MCF 10A (cell line): ENCODE measurements at regions of chr4 and their contacts with region 1.

Region 1: GRCh38 chr4:118968005-118968404 is 79.4 kb downstream of the SYNPO2 start:
- DNase-seq: peak; percentile 60
- H3K4me3 Mint-ChIP-seq: no peak overlapping the region
- H3K27ac Mint-ChIP-seq: peak overlapping the region; percentile 74
- H3K4me1 Mint-ChIP-seq: peaks cover 15% of the 10 kb centered on the region
- H3K27me3 Mint-ChIP-seq: no peaks in the 10 kb centered on the region
- CTCF ChIP-seq: no peak

Region 2: GRCh38 chr4:118684873-118685811 is 282.9 kb before region 1 on chr4 and contains the start of gene METTL14:
- CTCF ChIA-PET with region 1: interaction called, 3 read pairs
- POLR2A ChIA-PET with region 1: interaction called, 5 read pairs
- intact Hi-C with region 1: loop called (anchors 10 kb)
- DNase-seq: peak; percentile 92
- H3K4me3 Mint-ChIP-seq: peak within 1 kb of the TSS; percentile 84
- H3K27ac Mint-ChIP-seq: peak within 1 kb of the TSS; percentile 82
- H3K4me1 Mint-ChIP-seq: peaks cover 14% of the 10 kb centered on the region
- H3K27me3 Mint-ChIP-seq: no peaks in the 10 kb centered on the region
- CTCF ChIP-seq: peak; percentile 11
- total RNA-seq, gene METTL14: 32.6 and 32.8 TPM in 2 replicates

Region 3: GRCh38 chr4:118740869-118741268 is 227.1 kb before region 1 on chr4:
- CTCF ChIA-PET with region 1: interaction called, 45 read pairs
- POLR2A ChIA-PET with region 1: interaction called, 7 read pairs
- intact Hi-C with region 1: no loop called
- DNase-seq: peak; percentile 23
- H3K4me3 Mint-ChIP-seq: no peak overlapping the region
- H3K27ac Mint-ChIP-seq: no peak overlapping the region
- H3K4me1 Mint-ChIP-seq: no peaks in the 10 kb centered on the region
- H3K27me3 Mint-ChIP-seq: no peaks in the 10 kb centered on the region
- CTCF ChIP-seq: peak; percentile 19

Region 4: GRCh38 chr4:118746292-118746919 is 221.6 kb before region 1 on chr4:
- CTCF ChIA-PET with region 1: interaction called, 45 read pairs
- POLR2A ChIA-PET with region 1: interaction called, 3 read pairs
- intact Hi-C with region 1: no loop called
- DNase-seq: no peak
- H3K4me3 Mint-ChIP-seq: no peak overlapping the region
- H3K27ac Mint-ChIP-seq: no peak overlapping the region
- H3K4me1 Mint-ChIP-seq: no peaks in the 10 kb centered on the region
- H3K27me3 Mint-ChIP-seq: no peaks in the 10 kb centered on the region
- CTCF ChIP-seq: no peak